G401 (cell line): ENCODE measurements at regions of chr19 and their contacts with region 1.

Region 1: DNA sequence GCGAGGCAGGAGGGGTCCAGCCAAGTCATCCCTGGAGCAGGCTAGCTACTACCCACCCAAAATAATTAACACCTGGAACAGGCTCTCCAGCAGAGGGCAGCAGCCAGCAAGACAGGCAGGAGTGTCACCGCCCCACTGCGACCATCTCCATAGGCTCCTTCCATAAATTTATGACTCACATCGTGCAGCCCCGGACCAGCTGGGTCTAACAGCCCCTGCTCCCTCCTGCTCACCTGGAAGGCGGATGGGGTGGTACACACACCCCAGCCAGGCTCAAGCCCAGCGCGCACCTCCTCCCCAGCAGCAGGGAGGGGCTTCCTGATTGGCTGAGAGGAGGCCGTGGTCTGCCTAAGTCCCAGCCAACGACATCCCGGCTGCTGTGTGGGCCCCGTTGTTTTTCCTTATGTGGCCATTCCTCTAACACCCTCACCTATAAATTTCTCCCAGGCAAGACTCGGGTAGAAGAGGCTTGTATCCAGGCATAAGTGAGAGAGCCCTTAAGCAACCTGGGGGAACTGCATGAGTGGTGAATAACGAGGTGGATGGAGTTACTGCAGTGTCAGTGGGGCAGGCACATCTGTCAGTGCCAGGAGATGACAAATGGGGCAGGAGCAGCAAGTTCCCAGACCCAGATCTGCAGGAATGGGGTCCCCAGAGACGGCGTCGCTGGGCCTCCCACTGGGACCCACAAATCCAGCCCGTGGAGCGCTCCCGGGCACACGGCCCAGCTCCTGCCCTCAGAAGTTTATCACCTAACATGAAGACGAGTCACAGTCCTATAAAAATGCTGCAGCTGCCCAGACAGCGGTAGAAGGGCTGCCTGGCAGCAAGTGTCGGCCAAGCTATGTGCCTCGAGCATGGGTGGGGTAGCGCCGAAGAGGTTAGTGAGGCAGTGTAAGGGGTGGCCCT is 43.1 kb downstream of the CEBPG start:
- DNase-seq: peak; percentile 62

Region 2: DNA sequence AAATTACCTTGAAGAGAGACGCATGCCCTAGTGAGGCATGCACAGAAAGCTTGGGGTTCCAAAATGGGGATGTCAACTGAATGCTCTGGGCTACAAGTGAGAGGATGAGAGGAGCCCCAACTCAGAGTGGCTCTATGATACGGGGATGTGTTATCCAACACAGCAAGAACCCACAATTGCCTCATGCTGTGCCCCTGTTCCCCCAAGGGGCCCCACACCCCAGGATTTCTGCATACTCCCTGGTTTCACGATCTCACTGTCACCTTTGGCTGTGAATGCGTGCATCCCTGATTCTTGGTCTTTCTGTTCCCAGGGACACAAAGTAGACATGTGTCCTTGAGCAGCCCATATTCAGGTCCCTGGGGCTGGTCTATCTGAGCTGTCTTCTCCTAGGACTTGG is 255.4 kb before region 1 on chr19:
- in situ Hi-C with region 1: loop called (anchors 10 kb)
- DNase-seq: no peak

Region 3: GRCh38 chr19:33562636-33563035 is 146.1 kb after region 1 on chr19:
- in situ Hi-C with region 1: no loop called
- DNase-seq: no peak

Region 4: DNA sequence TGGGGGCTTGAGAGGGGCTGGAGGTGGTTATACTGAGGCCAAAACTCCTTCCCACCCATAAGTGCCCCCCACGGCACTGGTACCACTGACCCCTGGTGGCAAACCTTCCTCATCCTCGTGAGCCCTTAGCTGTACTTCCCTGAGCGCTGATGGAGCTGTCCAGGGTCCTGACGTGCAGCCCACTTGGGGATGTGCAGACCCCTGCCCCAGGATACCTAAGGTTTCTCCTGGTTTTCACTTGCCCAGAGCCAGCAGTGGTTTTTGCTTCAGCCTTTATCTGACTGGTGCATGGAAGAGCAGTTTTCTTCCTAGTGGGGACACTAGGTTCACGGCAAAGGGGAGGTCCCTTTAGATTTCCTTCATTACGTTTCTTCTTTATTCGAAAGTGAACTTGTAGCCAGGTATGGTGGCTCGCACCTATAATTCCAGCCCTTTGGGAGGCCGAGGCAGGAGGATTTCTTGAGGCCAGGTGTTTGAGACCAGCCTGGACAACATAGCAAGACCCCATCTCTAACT is 351.4 kb after region 1 on chr19:
- in situ Hi-C with region 1: loop called (anchors 10 kb)
- DNase-seq: no peak